B cell (primary cell): ENCODE measurements at regions of chr12 and their contacts with region 1.

Region 1: GRCh38 chr12:123150744-123151456 is at the start of gene PITPNM2:
- DNase-seq: peak; percentile 80
- ATAC-seq: peak; percentile 85
- H3K4me3 ChIP-seq: peak within 1 kb of the TSS; percentile 45 to 78 (median 68)
- H3K4me3 Mint-ChIP-seq: peak within 1 kb of the TSS; percentile 86
- H3K27ac ChIP-seq: peak within 1 kb of the TSS in 1 of 2 donors; percentile 78
- H3K27ac Mint-ChIP-seq: peak within 1 kb of the TSS; percentile 83
- H3K4me1 ChIP-seq: peaks cover 10 to 29% of the 10 kb centered on the region in 2 donors
- H3K4me1 Mint-ChIP-seq: peaks cover 24% of the 10 kb centered on the region
- H3K27me3 ChIP-seq: peaks cover 0 to 7% (median 2%) of the 10 kb centered on the region in 4 experiments
- H3K27me3 Mint-ChIP-seq: no peaks in the 10 kb centered on the region
- CTCF ChIP-seq: no peak
- total RNA-seq, gene PITPNM2: 28.6 and 30.3 TPM in 2 replicates

Region 2: GRCh38 chr12:122974274-122974891 is 176.5 kb before region 1 on chr12:
- CTCF ChIA-PET with region 1: no interaction called
- POLR2A ChIA-PET with region 1: no interaction called
- intact Hi-C with region 1: loop called (anchors 2 kb)
- DNase-seq: peak; percentile 98
- ATAC-seq: peak; percentile 89
- H3K4me3 ChIP-seq: peak overlapping the region; percentile 76 to 97 (median 90)
- H3K4me3 Mint-ChIP-seq: peak overlapping the region; percentile 100
- H3K27ac ChIP-seq: peak overlapping the region; percentile 91 to 99
- H3K27ac Mint-ChIP-seq: peak overlapping the region; percentile 98
- H3K4me1 ChIP-seq: peaks cover 19 to 36% of the 10 kb centered on the region in 2 donors
- H3K4me1 Mint-ChIP-seq: peaks cover 32% of the 10 kb centered on the region
- H3K27me3 ChIP-seq: no peaks in the 10 kb centered on the region
- H3K27me3 Mint-ChIP-seq: no peaks in the 10 kb centered on the region
- CTCF ChIP-seq: no peak

Region 3: DNA sequence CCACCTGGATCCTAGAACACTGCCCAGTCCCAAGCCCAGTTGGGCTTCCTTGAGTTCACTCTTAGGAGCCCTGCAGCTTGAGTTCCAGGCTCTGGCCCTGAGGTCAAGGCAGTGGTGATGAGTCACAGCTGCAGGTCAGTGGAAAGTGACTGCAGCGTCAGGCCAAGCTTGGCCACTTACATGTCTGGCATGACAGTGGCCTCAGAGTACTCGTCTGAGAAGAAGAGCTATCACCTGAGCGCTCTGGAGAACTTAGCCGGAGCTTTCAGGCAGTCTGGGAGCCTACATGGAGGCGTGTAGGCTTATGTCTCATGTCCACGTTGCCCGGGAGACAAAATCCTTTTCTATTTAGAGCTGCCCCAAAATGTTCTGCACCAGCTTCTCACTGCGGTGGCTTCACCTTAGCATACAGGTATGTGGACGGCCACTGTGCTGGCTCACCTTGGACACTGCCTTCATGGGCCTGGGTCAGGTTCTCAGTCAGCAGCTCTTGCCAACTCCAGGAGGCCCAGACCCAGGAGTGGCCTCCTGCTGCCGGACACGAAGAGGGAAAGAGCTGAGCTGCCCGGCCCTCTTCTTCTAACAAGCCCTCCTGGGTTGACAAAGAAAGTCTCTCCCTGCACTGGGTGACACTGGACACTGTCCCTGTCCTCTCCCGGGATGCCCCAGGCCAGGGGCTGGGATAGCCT is 94.7 kb before region 1 on chr12:
- CTCF ChIA-PET with region 1: interaction called, 5 read pairs
- POLR2A ChIA-PET with region 1: no interaction called
- intact Hi-C with region 1: loop called (anchors 5 kb)
- DNase-seq: no peak
- ATAC-seq: no peak
- H3K4me3 ChIP-seq: no peak overlapping the region
- H3K4me3 Mint-ChIP-seq: no peak overlapping the region
- H3K27ac ChIP-seq: no peak overlapping the region
- H3K27ac Mint-ChIP-seq: no peak overlapping the region
- H3K4me1 ChIP-seq: peaks cover 11 to 19% of the 10 kb centered on the region in 2 donors
- H3K4me1 Mint-ChIP-seq: peaks cover 29% of the 10 kb centered on the region
- H3K27me3 ChIP-seq: no peaks in the 10 kb centered on the region
- H3K27me3 Mint-ChIP-seq: no peaks in the 10 kb centered on the region
- CTCF ChIP-seq: no peak

Region 4: DNA sequence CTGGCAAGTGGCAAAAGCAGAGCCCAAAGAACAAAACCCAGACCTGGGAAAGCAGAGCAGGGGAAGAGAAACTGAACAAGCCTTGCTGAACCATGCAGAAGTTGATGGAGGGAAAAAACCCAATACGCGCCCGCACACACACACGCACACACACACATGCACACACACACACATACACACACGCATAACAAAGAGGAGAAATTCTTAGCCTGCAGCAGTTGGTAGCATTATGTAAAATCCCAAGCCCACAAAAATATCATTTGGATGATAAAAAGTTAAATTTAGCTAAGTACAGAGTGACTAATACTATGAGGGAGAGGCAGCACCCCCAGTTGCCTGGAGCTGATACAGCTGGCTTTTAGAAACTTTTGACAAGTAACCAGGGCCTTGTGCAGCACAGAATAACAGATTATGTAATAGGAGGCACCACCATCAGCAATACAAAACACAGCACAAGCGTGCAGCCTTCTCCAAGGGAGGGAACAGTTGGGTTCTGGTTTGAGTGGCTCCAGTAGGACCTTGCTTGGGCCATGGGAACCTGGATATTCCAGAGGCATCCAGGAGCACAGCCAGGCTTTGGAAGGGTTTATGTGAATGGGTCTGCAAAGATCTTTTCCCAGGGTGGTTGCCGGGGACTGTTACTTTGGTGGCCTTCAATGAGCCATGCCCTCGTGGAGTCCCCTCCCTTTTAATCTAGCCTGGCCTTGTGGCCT is 35.3 kb before region 1 on chr12:
- CTCF ChIA-PET with region 1: interaction called, 9 read pairs
- POLR2A ChIA-PET with region 1: interaction called, 4 read pairs
- intact Hi-C with region 1: loop called (anchors 2 kb)
- DNase-seq: peak; percentile 89
- ATAC-seq: peak; percentile 66
- H3K4me3 ChIP-seq: peak overlapping the region in 2 of 5 experiments; percentile 12 to 31
- H3K4me3 Mint-ChIP-seq: peak overlapping the region; percentile 67
- H3K27ac ChIP-seq: peak overlapping the region; percentile 72 to 85
- H3K27ac Mint-ChIP-seq: peak overlapping the region; percentile 89
- H3K4me1 ChIP-seq: peaks cover 54 to 62% of the 10 kb centered on the region in 2 donors
- H3K4me1 Mint-ChIP-seq: peaks cover 61% of the 10 kb centered on the region
- H3K27me3 ChIP-seq: no peaks in the 10 kb centered on the region
- H3K27me3 Mint-ChIP-seq: no peaks in the 10 kb centered on the region
- CTCF ChIP-seq: no peak

Region 5: DNA sequence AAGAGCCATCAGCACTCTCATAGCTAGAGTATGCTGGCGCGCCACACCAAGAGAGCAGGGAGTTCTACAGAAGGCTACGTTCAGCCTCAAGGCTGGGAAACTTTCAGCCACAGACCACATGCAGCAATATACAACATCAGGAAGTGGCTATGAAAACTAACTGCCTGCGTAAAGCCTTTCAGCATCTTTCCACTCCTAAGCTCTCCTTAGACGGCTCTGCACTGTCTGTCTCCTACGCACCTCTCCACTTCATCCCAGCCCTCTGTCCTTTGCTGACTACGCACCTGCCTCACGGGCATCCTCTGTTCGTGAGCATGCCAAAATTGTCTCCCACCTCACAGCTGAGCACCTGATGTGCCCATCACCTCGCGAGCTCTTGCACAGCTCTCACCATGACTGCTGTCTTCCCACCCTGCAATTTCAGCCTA is 72.4 kb after region 1 on chr12:
- CTCF ChIA-PET with region 1: no interaction called
- POLR2A ChIA-PET with region 1: no interaction called
- intact Hi-C with region 1: no loop called
- DNase-seq: no peak
- ATAC-seq: no peak
- H3K4me3 ChIP-seq: no peak overlapping the region
- H3K4me3 Mint-ChIP-seq: no peak overlapping the region
- H3K27ac ChIP-seq: no peak overlapping the region
- H3K27ac Mint-ChIP-seq: no peak overlapping the region
- H3K4me1 ChIP-seq: no peaks in the 10 kb centered on the region
- H3K4me1 Mint-ChIP-seq: peaks cover 9% of the 10 kb centered on the region
- H3K27me3 ChIP-seq: no peaks in the 10 kb centered on the region
- H3K27me3 Mint-ChIP-seq: no peaks in the 10 kb centered on the region
- CTCF ChIP-seq: no peak